Activated CD4-positive, alpha-beta T cell treated with anti-CD3 and anti-CD28 coated beads, Interleukin-2, amount 10 ng/mL, durations not matched to agents 24 days and 14 days (primary cell): ENCODE measurements at regions of chr7 and their contacts with region 1.

Region 1: DNA sequence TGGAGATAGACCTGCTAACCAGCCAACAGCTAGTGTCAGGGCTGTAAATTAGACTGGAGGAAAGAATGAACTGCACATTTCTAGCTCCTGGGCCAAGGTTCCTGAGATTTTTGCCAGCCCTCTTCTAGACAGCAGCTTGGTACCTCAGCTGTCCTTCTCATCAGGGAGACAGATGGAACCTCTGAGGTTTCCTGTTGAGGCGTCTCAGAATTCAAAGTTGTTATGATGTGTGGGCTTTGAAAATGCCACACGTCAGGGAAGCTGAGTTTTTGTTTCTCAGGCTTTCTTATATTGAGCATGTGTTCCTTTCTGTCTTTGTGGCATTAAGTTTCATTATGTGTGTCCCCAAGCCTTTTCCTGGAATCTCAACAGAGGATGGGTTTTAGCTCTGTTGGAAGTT is 736.6 kb downstream of the AUTS2 start:
- DNase-seq: peak; percentile 60
- H3K4me3 Mint-ChIP-seq: no peak overlapping the region
- H3K27ac Mint-ChIP-seq: no peak overlapping the region
- H3K4me1 Mint-ChIP-seq: peaks cover 9% of the 10 kb centered on the region
- H3K27me3 Mint-ChIP-seq: peaks cover 1% of the 10 kb centered on the region

Region 2: GRCh38 chr7:70316786-70317755 is 17.8 kb before region 1 on chr7:
- intact Hi-C with region 1: loop called (anchors 1 kb)
- DNase-seq: peak; percentile 79
- H3K4me3 Mint-ChIP-seq: peak overlapping the region; percentile 31
- H3K27ac Mint-ChIP-seq: peak overlapping the region; percentile 40
- H3K4me1 Mint-ChIP-seq: peaks cover 18% of the 10 kb centered on the region
- H3K27me3 Mint-ChIP-seq: no peaks in the 10 kb centered on the region

Region 3: DNA sequence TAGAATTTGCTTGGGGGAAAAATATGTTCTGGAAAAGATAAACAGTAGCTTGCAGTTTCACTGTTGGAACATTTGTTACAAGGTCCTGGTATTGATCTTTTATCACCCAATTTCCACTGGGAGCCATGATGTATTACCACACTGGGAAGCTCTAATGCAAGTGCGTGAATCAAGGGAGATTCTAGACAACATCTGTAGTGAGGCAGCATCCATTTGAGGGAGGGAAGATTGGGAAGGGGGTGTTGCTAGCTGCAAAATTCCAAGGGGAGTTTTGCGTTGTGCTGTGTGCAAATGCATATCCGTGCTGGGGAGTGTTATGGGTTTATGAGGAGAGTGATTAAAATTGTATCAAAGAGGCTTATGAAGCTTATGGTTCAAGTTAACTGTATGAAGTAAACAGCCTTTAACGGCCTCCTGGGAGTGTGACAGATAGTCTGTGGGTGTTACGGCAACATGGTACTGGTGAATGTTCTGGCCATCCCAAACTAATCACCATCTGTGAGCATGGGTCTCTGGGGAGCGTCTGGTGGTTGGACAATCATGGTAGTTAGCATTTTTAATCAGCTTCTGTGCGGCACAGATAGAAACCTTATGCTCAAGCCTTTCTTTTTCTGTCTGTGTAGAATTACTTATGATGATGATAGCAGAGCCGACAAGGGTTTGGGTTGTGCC is 195.2 kb after region 1 on chr7:
- intact Hi-C with region 1: no loop called
- DNase-seq: no peak
- H3K4me3 Mint-ChIP-seq: no peak overlapping the region
- H3K27ac Mint-ChIP-seq: no peak overlapping the region
- H3K4me1 Mint-ChIP-seq: no peaks in the 10 kb centered on the region
- H3K27me3 Mint-ChIP-seq: no peaks in the 10 kb centered on the region